ENCODE measurements at regions of chr12 and their contacts with region 1.

Region 1: GRCh38 chr12:113955109-113955970 is 10.8 kb downstream of the RBM19 start:
- DNase-seq: no peak
- H3K4me3 ChIP-seq: no peak overlapping the region
- H3K27ac ChIP-seq: no peak overlapping the region
- H3K4me1 ChIP-seq: no peaks in the 10 kb centered on the region
- H3K27me3 ChIP-seq: no peaks in the 10 kb centered on the region

Region 2: GRCh38 chr12:113965951-113966797 is 10.8 kb after region 1 on chr12 and contains the start of gene RBM19:
- CTCF ChIA-PET with region 1: interaction called, 12 read pairs
- POLR2A ChIA-PET with region 1: no interaction called
- DNase-seq: peak; percentile 96 to 99 (median 97)
- H3K4me3 ChIP-seq: peak within 1 kb of the TSS; percentile 70 to 98 (median 96)
- H3K27ac ChIP-seq: peak within 1 kb of the TSS; percentile 35 to 80
- H3K4me1 ChIP-seq: peaks cover 7 to 22% (median 18%) of the 10 kb centered on the region in 4 experiments
- H3K27me3 ChIP-seq: peaks cover 0 to 3% (median 0%) of the 10 kb centered on the region in 5 experiments